Activated CD4-positive, alpha-beta T cell treated with anti-CD3 and anti-CD28 coated beads for 36 hours (primary cell): ENCODE measurements at regions of chr5 and their contacts with region 1.

Region 1: DNA sequence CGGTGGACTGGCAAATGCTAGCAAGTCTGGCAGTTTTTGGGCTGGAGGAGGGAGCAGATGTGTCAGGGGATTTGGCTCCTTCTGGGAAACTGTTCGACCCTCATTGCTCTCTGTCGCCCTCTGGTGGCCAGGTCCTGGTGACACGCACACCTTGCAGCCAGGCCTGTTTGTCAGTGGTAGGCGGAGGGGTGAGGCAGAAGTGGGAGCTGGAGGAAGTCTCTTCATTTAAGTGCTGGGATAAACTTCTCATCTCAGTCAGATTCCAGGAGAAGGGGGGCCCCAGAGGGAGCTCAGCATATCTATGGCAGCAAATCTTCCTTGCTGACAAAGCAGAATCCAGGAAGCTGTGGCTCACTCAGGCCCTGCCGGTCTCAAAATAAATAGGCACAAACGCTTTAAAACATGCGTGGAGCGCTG is 326.5 kb downstream of the ZSWIM6 start:
- DNase-seq: peak; percentile 91
- ATAC-seq: peak; percentile 86
- H3K4me3 Mint-ChIP-seq: no peak overlapping the region
- H3K27ac Mint-ChIP-seq: no peak overlapping the region
- H3K4me1 Mint-ChIP-seq: no peaks in the 10 kb centered on the region
- H3K27me3 Mint-ChIP-seq: peaks cover 3% of the 10 kb centered on the region

Region 2: DNA sequence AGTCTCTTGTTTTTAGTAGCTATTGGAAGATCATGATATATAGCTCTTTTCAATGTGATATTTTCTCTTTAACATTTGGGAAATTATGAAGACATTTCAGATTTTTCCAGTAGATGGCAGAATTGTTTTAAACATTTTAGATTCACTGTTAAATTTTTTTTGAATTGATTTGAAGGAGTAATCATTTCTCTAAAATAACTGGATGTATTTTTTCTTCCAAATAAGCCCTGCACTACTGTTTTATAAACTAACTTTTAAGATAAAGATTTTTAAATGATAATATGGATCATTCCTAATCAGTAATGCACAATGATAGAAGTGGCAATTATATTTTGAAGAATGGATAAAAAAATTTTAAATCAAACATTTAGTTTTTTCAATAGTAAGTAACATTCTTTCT is 699.4 kb before region 1 on chr5:
- CTCF ChIA-PET with region 1: interaction called, 5 read pairs
- POLR2A ChIA-PET with region 1: no interaction called
- intact Hi-C with region 1: loop called (anchors 1 kb)
- DNase-seq: no peak
- ATAC-seq: no peak
- H3K4me3 Mint-ChIP-seq: no peak overlapping the region
- H3K27ac Mint-ChIP-seq: no peak overlapping the region
- H3K4me1 Mint-ChIP-seq: peaks cover 14% of the 10 kb centered on the region
- H3K27me3 Mint-ChIP-seq: no peaks in the 10 kb centered on the region

Region 3: DNA sequence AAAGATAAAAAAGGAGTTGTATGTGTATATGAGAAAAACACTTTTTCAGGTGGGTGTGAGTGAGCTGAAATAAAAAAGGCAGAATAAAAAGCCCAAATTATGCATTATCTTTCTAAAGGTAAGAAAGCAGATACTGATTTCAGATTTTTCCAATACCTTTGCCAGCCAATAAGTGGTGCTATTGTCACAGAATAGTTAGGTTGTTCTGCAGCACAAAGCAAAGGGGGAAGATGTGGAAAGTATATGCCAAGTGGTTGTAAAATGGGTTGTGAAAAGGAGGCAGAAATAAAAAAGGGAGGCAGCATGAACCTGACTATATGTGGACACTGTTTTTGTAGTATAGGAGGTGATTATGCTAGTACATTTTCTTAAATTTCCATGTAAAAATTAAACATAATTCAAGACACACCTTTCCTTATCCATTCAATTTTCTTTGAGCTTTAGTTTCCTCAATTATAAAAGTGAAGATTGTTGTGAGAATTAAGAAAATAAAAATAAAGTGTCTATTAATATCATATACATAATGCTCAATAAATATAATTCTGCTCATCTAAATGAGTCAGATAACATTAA is 603.1 kb before region 1 on chr5:
- CTCF ChIA-PET with region 1: interaction called, 13 read pairs
- POLR2A ChIA-PET with region 1: no interaction called
- intact Hi-C with region 1: loop called (anchors 1 to 5 kb)
- DNase-seq: no peak
- ATAC-seq: peak; percentile 49
- H3K4me3 Mint-ChIP-seq: no peak overlapping the region
- H3K27ac Mint-ChIP-seq: no peak overlapping the region
- H3K4me1 Mint-ChIP-seq: peaks cover 4% of the 10 kb centered on the region
- H3K27me3 Mint-ChIP-seq: no peaks in the 10 kb centered on the region

Region 4: DNA sequence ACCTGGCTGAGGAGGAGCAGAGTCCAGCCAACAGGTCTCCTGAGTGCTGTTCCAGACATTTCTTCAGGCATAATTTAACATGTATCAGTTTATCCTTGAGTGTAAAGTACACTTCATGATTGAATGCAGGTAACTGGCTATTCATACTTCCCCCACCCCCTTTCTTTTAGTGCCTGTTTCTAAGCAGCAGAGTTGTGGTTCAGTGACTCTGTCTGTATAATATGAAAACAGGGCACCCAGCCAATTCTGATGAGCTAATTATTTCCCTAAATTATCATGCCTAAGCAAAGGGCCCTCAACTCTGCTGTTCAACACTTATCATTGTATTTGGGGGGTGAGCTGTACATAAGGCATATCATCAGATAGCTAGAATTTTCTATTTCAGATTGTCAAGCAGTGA is 378.4 kb before region 1 on chr5:
- CTCF ChIA-PET with region 1: no interaction called
- POLR2A ChIA-PET with region 1: no interaction called
- intact Hi-C with region 1: loop called (anchors 2 to 5 kb)
- DNase-seq: peak; percentile 35
- ATAC-seq: peak; percentile 39
- H3K4me3 Mint-ChIP-seq: no peak overlapping the region
- H3K27ac Mint-ChIP-seq: no peak overlapping the region
- H3K4me1 Mint-ChIP-seq: peaks cover 41% of the 10 kb centered on the region
- H3K27me3 Mint-ChIP-seq: no peaks in the 10 kb centered on the region

Region 5: DNA sequence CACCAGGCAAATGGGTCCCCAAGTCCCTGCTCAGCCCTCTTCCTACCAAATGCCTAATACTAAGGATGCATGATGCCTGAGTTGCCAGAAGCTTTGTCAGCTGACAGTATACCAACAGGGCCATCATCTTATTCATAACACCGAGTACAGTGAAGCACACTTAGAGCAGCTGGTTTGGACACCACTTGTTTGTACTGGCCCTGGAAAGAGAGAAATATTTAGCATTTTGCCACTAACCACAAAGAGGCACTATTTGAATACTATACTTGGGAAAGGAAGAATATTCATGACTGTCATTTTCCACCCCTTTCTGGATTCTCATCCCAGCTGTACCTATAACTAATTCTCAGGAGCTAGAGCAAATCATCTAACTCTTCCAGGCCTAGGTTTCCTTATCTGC is 283.0 kb after region 1 on chr5:
- CTCF ChIA-PET with region 1: no interaction called
- POLR2A ChIA-PET with region 1: no interaction called
- intact Hi-C with region 1: no loop called
- DNase-seq: no peak
- ATAC-seq: no peak
- H3K4me3 Mint-ChIP-seq: no peak overlapping the region
- H3K27ac Mint-ChIP-seq: no peak overlapping the region
- H3K4me1 Mint-ChIP-seq: no peaks in the 10 kb centered on the region
- H3K27me3 Mint-ChIP-seq: no peaks in the 10 kb centered on the region